WTC11 (cell line): ENCODE measurements at regions of chr11 and their contacts with region 1.

Region 1: DNA sequence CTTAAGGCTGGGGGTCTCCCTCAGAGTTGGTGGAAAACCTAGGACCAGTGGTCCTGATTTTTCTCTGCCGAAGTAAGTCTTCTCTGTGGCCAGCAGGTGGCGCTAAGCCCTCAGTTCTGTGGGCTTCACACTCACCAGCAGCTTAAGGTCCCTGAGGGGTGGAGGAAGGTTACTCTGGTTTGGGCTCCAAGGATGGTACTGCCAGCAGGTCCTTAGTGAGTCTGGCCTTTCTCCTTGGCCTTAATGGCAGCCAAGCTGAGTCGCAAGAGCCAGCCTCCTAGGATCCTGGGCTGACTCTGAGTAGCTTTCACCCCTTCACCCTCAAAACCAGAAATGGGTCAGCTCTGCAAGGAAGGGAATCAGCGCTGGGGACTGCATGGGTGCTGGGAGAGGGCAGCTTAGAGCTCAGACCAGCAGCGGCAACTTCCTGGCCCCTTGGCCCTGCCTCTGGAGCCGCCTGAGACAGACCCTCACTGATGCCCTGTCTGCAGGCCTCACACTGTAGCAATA is 4.4 kb downstream of the KCNJ11 start:
- DNase-seq: peak; percentile 84
- ATAC-seq: peak; percentile 71
- H3K4me3 Mint-ChIP-seq: no peak overlapping the region
- H3K27ac Mint-ChIP-seq: no peak overlapping the region
- H3K4me1 Mint-ChIP-seq: no peaks in the 10 kb centered on the region
- H3K27me3 Mint-ChIP-seq: peaks cover 7% of the 10 kb centered on the region
- CTCF ChIP-seq: peak; percentile 93

Region 2: DNA sequence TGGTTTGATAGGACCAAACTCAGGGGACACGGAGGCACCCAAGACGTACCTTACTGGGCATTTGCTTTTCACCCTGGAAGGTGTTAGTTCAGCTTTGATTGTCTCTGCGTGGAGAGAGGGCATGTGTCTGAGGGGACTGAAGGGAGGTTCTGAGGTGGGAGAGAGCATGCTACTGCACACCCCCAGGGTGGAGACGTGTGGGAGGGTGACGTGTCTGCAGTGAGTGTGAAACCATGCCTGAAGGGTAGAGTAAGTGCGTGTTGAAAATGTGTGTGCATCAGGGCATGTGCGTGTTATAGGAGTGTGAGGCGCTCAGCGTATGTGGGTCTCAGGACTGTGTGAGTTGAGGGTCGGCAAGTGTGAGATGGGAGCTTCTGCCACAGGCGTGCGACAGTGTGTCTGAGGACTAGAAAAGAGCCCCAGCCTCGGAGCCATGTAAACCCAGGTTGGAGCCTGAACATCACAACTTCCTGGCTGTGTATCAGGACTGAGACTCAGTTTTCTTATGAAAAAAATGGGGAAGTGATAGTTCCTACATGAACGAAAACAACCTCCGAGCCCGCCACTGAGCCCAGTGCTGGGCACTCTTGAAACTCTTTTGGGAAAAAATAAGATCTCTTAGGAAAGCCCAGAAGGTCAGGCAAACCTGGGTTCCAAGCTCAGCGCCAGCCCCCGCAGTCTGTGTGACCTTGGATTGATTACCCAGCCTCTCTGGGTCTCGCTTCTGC is 16.2 kb after region 1 on chr11:
- CTCF ChIA-PET with region 1: interaction called, 27 read pairs
- POLR2A ChIA-PET with region 1: no interaction called
- DNase-seq: no peak
- ATAC-seq: no peak
- H3K4me3 Mint-ChIP-seq: no peak overlapping the region
- H3K27ac Mint-ChIP-seq: no peak overlapping the region
- H3K4me1 Mint-ChIP-seq: no peaks in the 10 kb centered on the region
- H3K27me3 Mint-ChIP-seq: no peaks in the 10 kb centered on the region
- CTCF ChIP-seq: no peak

Region 3: GRCh38 chr11:17479284-17480214 is 95.5 kb after region 1 on chr11:
- CTCF ChIA-PET with region 1: interaction called, 56 read pairs
- POLR2A ChIA-PET with region 1: interaction called, 3 read pairs
- DNase-seq: peak; percentile 74
- ATAC-seq: peak; percentile 71
- H3K4me3 Mint-ChIP-seq: no peak overlapping the region
- H3K27ac Mint-ChIP-seq: no peak overlapping the region
- H3K4me1 Mint-ChIP-seq: peaks cover 19% of the 10 kb centered on the region
- H3K27me3 Mint-ChIP-seq: peaks cover 52% of the 10 kb centered on the region
- CTCF ChIP-seq: no peak

Region 4: DNA sequence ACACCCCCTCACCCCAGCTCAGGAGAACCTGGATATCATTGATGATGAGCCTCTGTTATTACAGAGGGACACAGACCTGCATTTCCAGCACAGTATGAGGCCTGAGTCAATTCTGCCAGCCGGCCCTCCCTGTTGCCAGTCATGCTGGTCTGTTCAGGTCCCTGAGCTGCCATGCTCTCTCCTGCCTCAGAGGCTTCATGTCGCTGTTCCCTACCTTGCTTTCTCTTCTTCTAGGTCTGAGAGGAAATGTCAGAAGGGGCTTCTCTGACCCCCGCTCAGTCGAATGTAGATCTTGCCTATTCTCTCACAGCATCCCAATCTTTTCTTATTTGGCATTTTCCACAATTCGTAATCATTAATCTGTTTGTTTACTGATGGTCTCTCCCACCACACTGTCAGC is 114.4 kb after region 1 on chr11:
- CTCF ChIA-PET with region 1: interaction called, 47 read pairs
- POLR2A ChIA-PET with region 1: no interaction called
- DNase-seq: peak; percentile 47
- ATAC-seq: peak; percentile 89
- H3K4me3 Mint-ChIP-seq: no peak overlapping the region
- H3K27ac Mint-ChIP-seq: no peak overlapping the region
- H3K4me1 Mint-ChIP-seq: 0 out of 2 replicates have a peak, but pooled peaks cover 2% of the 10 kb centered on the region
- H3K27me3 Mint-ChIP-seq: peaks cover 2% of the 10 kb centered on the region; the same call in 1 of the 2 replicates
- CTCF ChIP-seq: no peak

Region 5: GRCh38 chr11:17513853-17514252 is 129.8 kb after region 1 on chr11:
- CTCF ChIA-PET with region 1: interaction called, 13 read pairs
- POLR2A ChIA-PET with region 1: no interaction called
- DNase-seq: no peak
- ATAC-seq: no peak
- H3K4me3 Mint-ChIP-seq: no peak overlapping the region
- H3K27ac Mint-ChIP-seq: no peak overlapping the region
- H3K4me1 Mint-ChIP-seq: peaks cover 21% of the 10 kb centered on the region
- H3K27me3 Mint-ChIP-seq: no peaks in the 10 kb centered on the region; the same call in 1 of the 2 replicates
- CTCF ChIP-seq: no peak

Region 6: GRCh38 chr11:17544181-17544622 is 160.1 kb after region 1 on chr11 and contains the start of gene USH1C:
- CTCF ChIA-PET with region 1: interaction called, 11 read pairs
- POLR2A ChIA-PET with region 1: no interaction called
- DNase-seq: peak; percentile 79
- ATAC-seq: peak; percentile 57
- H3K4me3 Mint-ChIP-seq: peak within 1 kb of the TSS; percentile 72
- H3K27ac Mint-ChIP-seq: 0 out of 2 replicates have a peak within 1 kb of the TSS, but pooled peaks have one; percentile 30
- H3K4me1 Mint-ChIP-seq: peaks cover 49% of the 10 kb centered on the region
- H3K27me3 Mint-ChIP-seq: peaks cover 36% of the 10 kb centered on the region
- CTCF ChIP-seq: no peak
- total RNA-seq, gene USH1C: 3.3 to 3.9 TPM (median 3.7 TPM) in 3 replicates